ENCODE measurements at regions of chr20 and their contacts with region 1.

Region 1: DNA sequence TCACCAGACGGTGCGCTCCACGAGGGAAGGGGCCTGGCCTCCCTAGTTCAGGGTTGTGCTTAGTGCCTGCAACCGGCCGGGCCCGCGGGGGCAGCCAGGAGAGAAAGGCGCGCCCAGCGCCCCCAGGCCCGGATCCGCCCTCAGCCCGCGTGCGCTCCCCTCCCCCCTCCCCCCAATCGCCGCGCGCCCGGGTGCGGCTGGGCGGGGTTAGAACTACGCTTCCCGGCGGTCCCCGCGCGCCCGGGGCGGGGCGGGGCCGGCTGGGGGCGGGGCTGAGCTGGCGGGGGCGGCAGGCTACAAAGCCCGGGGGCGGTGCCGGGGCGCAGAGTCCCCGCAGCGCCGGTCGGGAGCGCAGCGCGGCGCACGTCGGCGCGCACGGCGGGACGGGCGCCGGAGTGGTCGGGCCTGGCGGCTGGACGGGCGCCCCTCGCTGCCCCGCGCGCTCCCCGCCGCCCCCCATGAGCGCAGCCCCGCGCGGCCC is at the start of gene RBM38:
- DNase-seq: no peak
- ATAC-seq: peak; percentile 48
- H3K4me3 ChIP-seq: peak within 1 kb of the TSS; percentile 94
- H3K27ac ChIP-seq: peak within 1 kb of the TSS; percentile 97
- H3K4me1 ChIP-seq: peaks cover 37% of the 10 kb centered on the region
- H3K27me3 ChIP-seq: no peaks in the 10 kb centered on the region
- CTCF ChIP-seq: no peak
- EP300 ChIP-seq: no peak
- POLR2A ChIP-seq: peak; percentile 55
- RAD21 ChIP-seq: no peak
- polyA plus RNA-seq, gene RBM38: 0.32 to 1.3 TPM

Region 2: DNA sequence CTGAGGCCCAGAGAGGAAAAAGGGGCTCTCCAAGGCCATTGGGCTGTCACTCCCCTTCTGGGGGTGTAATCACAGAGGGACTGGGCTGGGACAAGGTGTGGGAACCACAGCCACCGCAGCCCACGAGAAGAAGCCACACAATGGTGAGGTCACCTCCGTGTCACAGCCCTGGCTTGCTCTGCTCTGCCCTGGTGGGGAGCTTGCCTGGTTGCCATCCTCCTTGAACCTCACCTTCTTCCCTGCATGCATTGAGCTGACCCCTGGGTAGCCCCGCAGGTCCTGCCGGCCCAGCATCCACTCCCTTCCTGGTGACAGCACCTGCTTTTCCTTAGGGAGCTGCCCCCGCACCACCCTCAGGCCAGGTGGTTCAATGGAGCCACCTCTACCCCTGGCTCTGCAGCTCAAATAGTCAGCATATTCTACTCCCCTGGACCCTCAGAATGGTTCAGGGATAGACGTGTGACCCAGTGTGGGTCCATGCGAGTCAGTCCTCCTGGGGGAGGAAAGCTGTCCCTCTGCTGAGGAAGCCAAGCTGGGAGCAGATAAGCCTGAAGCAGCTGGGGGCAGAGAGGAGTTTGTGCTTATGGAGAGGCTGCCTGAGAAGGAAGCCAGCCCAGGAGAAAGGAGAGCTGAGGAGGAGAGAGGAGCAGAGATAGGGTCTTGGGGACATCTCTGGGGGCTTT is 21.4 kb after region 1 on chr20:
- CTCF ChIA-PET with region 1: interaction called, 3 read pairs
- POLR2A ChIA-PET with region 1: interaction called, 6 read pairs
- RAD21 ChIA-PET with region 1: interaction called, 16 read pairs
- SMC1A ChIA-PET with region 1: interaction called, 7 read pairs
- in situ Hi-C with region 1: no loop called
- intact Hi-C with region 1: no loop called
- DNase-seq: no peak
- ATAC-seq: peak; percentile 79
- H3K4me3 ChIP-seq: no peak overlapping the region
- H3K27ac ChIP-seq: no peak overlapping the region
- H3K4me1 ChIP-seq: no peaks in the 10 kb centered on the region
- H3K27me3 ChIP-seq: no peaks in the 10 kb centered on the region
- CTCF ChIP-seq: no peak
- EP300 ChIP-seq: 0 out of 4 replicates have a peak, but pooled peaks of 1 of the 2 experiments have one; percentile 62
- POLR2A ChIP-seq: no peak
- RAD21 ChIP-seq: no peak

Region 3: GRCh38 chr20:57480444-57481160 is 89.5 kb after region 1 on chr20:
- CTCF ChIA-PET with region 1: interaction called, 5 read pairs
- POLR2A ChIA-PET with region 1: interaction called, 14 read pairs
- RAD21 ChIA-PET with region 1: interaction called, 25 read pairs
- SMC1A ChIA-PET with region 1: interaction called, 16 read pairs
- in situ Hi-C with region 1: no loop called
- intact Hi-C with region 1: loop called (anchors 2 kb)
- DNase-seq: peak; percentile 83
- ATAC-seq: peak; percentile 59
- H3K4me3 ChIP-seq: peak overlapping the region; percentile 45
- H3K27ac ChIP-seq: peak overlapping the region; percentile 93
- H3K4me1 ChIP-seq: peaks cover 59% of the 10 kb centered on the region
- H3K27me3 ChIP-seq: no peaks in the 10 kb centered on the region
- CTCF ChIP-seq: no peak
- EP300 ChIP-seq: peak; percentile 69 to 74; a peak in 2 of 4 replicates
- POLR2A ChIP-seq: no peak; the same call in 1 of the 2 replicates
- RAD21 ChIP-seq: peak; percentile 1; the same call in 1 of the 2 replicates

Region 4: GRCh38 chr20:57498425-57499400 is 107.6 kb after region 1 on chr20:
- CTCF ChIA-PET with region 1: interaction called, 25 read pairs
- POLR2A ChIA-PET with region 1: interaction called, 12 read pairs
- RAD21 ChIA-PET with region 1: interaction called, 20 read pairs
- SMC1A ChIA-PET with region 1: interaction called, 20 read pairs
- in situ Hi-C with region 1: no loop called
- intact Hi-C with region 1: no loop called
- DNase-seq: no peak
- ATAC-seq: peak; percentile 93
- H3K4me3 ChIP-seq: no peak overlapping the region
- H3K27ac ChIP-seq: no peak overlapping the region
- H3K4me1 ChIP-seq: peaks cover 21% of the 10 kb centered on the region
- H3K27me3 ChIP-seq: peaks cover 0 to 2% of the 10 kb centered on the region in 2 experiments; a peak in 1 of 4 replicates
- CTCF ChIP-seq: peak; percentile 54 to 74 (median 70)
- EP300 ChIP-seq: no peak
- POLR2A ChIP-seq: no peak
- RAD21 ChIP-seq: peak; percentile 60

Region 5: DNA sequence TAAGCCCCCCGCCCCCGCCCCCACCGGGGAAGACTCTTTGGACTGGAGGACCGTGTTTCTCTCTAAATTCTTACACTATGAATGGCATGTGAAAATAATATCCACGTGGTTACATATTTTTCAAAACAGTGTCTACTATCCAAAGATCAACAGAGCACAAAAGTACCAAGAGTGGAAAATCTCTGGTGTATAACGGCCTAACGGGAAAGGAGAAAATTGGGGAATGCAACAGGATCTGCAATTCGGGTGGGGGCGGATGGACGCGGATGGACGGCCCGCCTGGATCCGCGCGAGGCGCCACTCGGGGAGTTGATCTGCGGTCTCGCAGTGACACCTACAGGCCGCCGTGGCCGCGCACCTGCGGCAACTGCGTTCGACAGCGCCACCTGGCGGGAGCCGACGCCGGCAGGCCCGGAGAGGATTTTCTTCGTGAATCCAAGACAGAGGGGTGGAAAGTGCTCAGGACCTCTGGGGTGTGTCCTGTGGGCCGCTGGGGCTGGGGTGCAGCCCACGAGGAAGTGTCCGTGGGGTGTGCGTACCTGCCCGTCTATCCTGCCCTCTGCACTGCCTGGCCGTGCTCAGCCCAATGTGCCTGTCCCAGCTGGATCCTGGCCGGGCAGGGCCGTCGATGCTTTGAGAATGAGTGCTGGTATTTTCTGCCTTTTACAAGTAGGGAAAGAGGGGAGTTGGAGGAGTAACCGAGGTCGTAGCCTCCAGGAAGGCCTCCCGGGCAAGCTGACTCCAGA is 818.7 kb after region 1 on chr20:
- CTCF ChIA-PET with region 1: no interaction called
- POLR2A ChIA-PET with region 1: no interaction called
- RAD21 ChIA-PET with region 1: no interaction called
- SMC1A ChIA-PET with region 1: no interaction called
- in situ Hi-C with region 1: loop called (anchors 10 kb)
- intact Hi-C with region 1: no loop called
- DNase-seq: peak; percentile 17
- ATAC-seq: peak; percentile 98
- H3K4me3 ChIP-seq: no peak overlapping the region
- H3K27ac ChIP-seq: no peak overlapping the region
- H3K4me1 ChIP-seq: no peaks in the 10 kb centered on the region
- H3K27me3 ChIP-seq: no peaks in the 10 kb centered on the region; a peak in 3 of 4 replicates
- CTCF ChIP-seq: peak; percentile 100; a peak in 5 of 6 replicates
- EP300 ChIP-seq: no peak
- POLR2A ChIP-seq: no peak
- RAD21 ChIP-seq: peak; percentile 89

Region 6: DNA sequence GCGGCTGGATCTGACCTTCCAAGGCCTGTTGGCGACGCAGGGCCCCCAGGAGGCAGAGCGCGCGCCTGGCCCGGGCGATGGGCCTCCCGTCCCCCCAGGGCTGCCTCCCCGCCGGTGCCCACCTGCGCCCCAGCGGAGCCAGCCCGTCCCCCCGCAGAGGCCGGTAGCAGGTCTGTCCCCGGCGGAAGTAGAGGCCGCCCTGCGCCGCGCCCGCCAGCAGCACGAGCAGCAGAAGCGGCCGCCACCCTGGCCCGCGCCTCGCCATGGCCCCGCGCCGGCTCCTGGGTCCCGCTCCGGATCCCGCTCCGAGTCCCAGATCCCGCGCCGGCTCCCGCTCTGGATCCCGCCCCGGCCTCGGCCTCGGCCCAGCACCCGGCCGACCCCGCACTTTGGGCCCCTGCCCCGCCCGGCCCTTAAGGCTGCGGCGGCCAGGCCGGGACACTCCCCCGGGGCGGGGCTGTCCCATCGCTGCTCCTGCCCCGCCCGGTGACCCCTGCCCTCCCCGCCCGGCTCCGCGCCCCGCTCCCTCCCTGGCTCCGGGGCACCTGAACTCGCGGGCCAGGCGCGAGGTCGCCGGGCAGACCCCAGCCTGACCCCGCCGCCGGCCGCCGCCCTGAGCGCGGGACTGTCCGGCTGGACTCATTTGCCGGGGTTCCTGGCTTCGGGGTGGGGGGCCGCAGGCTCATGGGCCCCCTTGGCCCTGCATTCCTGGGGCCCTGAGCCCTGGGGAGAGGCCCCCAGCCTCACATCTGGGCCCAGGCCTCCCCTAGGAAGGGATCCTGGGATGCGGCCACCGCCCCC is 1616.0 kb after region 1 on chr20 and contains the start of gene CTSZ:
- CTCF ChIA-PET with region 1: no interaction called
- POLR2A ChIA-PET with region 1: no interaction called
- RAD21 ChIA-PET with region 1: no interaction called
- SMC1A ChIA-PET with region 1: no interaction called
- in situ Hi-C with region 1: loop called (anchors 10 kb)
- intact Hi-C with region 1: no loop called
- DNase-seq: no peak
- ATAC-seq: peak; percentile 52
- H3K4me3 ChIP-seq: peak within 1 kb of the TSS; percentile 92
- H3K27ac ChIP-seq: peak within 1 kb of the TSS; percentile 95
- H3K4me1 ChIP-seq: peaks cover 35% of the 10 kb centered on the region
- H3K27me3 ChIP-seq: no peaks in the 10 kb centered on the region
- CTCF ChIP-seq: no peak
- EP300 ChIP-seq: no peak
- POLR2A ChIP-seq: peak; percentile 70
- RAD21 ChIP-seq: no peak
- polyA plus RNA-seq, gene CTSZ: 6.0 to 14.0 TPM